Activated naive CD4-positive, alpha-beta T cell treated with anti-CD3 and anti-CD28 coated beads for 36 hours (primary cell): ENCODE measurements at regions of chr13 and their contacts with region 1.

Region 1: DNA sequence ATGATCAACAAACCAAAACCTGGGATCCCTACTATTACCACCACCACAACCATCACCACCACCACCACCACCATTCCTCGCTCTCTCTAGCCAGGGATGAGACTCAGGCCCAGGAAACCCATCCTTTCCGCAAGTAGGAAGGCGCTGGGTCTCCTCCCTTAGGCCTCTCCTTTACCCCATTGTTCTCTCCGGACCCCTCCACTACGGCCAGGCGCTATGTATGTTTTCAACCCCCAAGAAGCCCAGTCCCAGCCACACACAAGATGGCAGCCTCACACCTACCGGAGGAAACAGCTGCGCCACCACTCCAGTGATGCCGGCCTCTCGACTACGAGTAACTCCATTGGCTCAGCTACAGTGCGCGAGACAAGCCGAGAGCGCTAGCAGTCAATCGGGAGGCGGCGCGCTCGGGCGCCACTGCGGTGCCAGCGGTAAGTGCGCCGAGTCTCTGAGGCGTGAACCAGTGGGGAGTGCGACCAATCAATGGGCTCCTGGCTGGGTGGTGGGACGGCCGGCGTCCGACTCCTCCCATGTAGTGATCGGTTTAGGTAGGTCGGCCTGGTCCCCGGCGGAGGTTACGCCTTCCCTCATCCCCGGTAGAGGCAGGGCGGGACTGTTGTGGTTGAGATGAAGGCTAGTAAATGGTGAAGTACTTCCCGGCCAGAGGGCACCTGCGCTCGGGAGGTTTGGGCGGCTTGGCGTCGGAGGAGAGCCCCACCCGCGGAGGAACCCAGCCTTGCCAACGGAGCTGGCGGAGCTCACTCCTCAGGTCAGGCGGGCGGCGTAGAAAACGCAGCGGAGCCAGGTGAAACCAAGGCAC is at the starts of genes CAB39L and SETDB2:
- DNase-seq: peak; percentile 99
- H3K4me3 Mint-ChIP-seq: peak within 1 kb of the TSS; percentile 92
- H3K27ac Mint-ChIP-seq: peak within 1 kb of the TSS; percentile 96
- H3K4me1 Mint-ChIP-seq: peaks cover 56% of the 10 kb centered on the region
- H3K27me3 Mint-ChIP-seq: no peaks in the 10 kb centered on the region
- total RNA-seq, gene CAB39L: 3.8 to 4.5 TPM
- total RNA-seq, gene SETDB2: 15.8 to 16.2 TPM

Region 2: GRCh38 chr13:48144413-48145035 is 1299.4 kb before region 1 on chr13:
- CTCF ChIA-PET with region 1: no interaction called
- intact Hi-C with region 1: loop called (anchors 10 kb)
- DNase-seq: peak; percentile 52
- H3K4me3 Mint-ChIP-seq: no peak overlapping the region
- H3K27ac Mint-ChIP-seq: peak overlapping the region; percentile 80
- H3K4me1 Mint-ChIP-seq: peaks cover 40% of the 10 kb centered on the region
- H3K27me3 Mint-ChIP-seq: no peaks in the 10 kb centered on the region

Region 3: DNA sequence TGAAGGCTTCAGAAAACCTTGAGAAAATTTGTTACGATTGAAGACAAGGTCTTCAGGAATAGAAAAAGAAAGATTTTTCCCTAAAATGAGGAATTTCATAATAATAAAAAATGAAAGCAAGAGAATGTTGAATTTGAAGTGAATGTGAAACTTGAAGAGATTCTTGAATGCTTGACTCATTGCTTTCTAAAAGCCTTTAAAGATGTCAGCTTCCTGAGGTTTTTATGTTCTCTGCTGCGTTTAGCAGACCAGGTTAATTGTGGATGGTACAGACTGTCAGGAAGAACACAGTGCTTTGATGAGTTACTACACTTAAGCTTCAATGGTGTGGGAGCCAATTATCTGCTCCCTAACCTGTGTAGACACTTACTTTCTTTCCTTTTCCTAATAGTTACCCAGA is 564.5 kb before region 1 on chr13:
- CTCF ChIA-PET with region 1: no interaction called
- intact Hi-C with region 1: loop called (anchors 5 kb)
- DNase-seq: no peak
- H3K4me3 Mint-ChIP-seq: no peak overlapping the region
- H3K27ac Mint-ChIP-seq: no peak overlapping the region
- H3K4me1 Mint-ChIP-seq: peaks cover 42% of the 10 kb centered on the region
- H3K27me3 Mint-ChIP-seq: no peaks in the 10 kb centered on the region

Region 4: DNA sequence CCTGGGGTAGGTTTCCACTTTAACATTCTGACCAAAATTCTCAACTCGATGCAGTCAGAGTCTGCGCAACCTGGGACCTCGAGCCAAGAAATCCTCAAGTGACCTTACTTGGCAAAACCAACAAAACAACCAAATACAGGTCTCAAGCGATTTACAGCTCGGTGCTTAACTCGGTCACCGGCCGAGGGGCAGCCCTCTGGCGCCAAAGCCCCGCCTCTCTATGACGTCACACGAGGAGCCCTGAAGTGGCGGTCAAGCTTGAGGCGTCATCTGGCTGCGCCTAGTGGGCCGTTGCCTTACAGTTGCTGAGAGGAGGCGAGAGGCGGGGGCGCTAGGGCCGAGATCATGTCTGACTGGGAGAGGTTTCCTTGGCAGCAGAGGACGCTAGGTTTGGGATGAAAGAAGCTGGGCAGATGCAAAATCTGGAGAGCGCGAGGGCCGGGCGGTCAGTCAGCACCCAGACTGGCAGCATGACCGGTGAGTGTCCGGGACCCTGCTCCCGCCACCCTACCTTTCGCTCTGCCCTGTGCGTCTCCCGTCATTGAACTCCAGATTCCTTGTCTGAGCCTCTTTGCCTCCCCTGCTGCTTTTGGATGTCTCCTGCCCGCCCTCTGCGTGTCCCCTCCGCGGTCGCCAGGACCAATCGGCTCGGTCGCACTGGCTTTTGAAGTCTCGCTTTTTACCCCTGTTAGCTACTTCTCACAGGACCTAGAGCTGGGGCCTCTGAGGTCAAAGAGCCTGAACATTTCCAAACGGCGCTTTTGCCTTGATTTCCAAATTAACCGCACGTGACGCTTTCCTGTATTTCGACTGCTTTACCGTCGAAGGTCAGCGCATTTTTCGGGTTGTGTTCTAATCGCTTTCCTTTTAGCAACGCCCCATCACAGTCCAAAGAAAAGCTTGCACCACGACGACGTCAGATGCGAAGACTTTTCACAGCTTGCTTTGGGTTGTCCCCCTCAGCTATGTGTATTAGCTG is 196.0 kb before region 1 on chr13 and contains the start of gene CDADC1:
- CTCF ChIA-PET with region 1: no interaction called
- intact Hi-C with region 1: loop called (anchors 2 kb)
- DNase-seq: peak; percentile 96
- H3K4me3 Mint-ChIP-seq: peak within 1 kb of the TSS; percentile 98
- H3K27ac Mint-ChIP-seq: peak within 1 kb of the TSS; percentile 92
- H3K4me1 Mint-ChIP-seq: peaks cover 34% of the 10 kb centered on the region
- H3K27me3 Mint-ChIP-seq: no peaks in the 10 kb centered on the region
- total RNA-seq, gene CDADC1: 13.2 to 14.7 TPM

Region 5: GRCh38 chr13:49569956-49570689 is 126.2 kb after region 1 on chr13:
- CTCF ChIA-PET with region 1: no interaction called
- intact Hi-C with region 1: loop called (anchors 1 kb)
- DNase-seq: peak; percentile 44
- H3K4me3 Mint-ChIP-seq: no peak overlapping the region
- H3K27ac Mint-ChIP-seq: peak overlapping the region; percentile 32
- H3K4me1 Mint-ChIP-seq: peaks cover 23% of the 10 kb centered on the region
- H3K27me3 Mint-ChIP-seq: no peaks in the 10 kb centered on the region

Region 6: GRCh38 chr13:49690992-49691886 is 247.3 kb after region 1 on chr13 and contains the start of gene EBPL:
- CTCF ChIA-PET with region 1: no interaction called
- intact Hi-C with region 1: loop called (anchors 2 kb)
- DNase-seq: peak; percentile 94
- H3K4me3 Mint-ChIP-seq: peak within 1 kb of the TSS; percentile 86
- H3K27ac Mint-ChIP-seq: peak within 1 kb of the TSS; percentile 80
- H3K4me1 Mint-ChIP-seq: peaks cover 35% of the 10 kb centered on the region
- H3K27me3 Mint-ChIP-seq: no peaks in the 10 kb centered on the region
- total RNA-seq, gene EBPL: 46.8 to 49.3 TPM

Region 7: GRCh38 chr13:49996951-49997895 is 553.3 kb after region 1 on chr13 and contains the start of gene TRIM13:
- CTCF ChIA-PET with region 1: no interaction called
- intact Hi-C with region 1: loop called (anchors 2 kb)
- DNase-seq: peak; percentile 90
- H3K4me3 Mint-ChIP-seq: peak within 1 kb of the TSS; percentile 79
- H3K27ac Mint-ChIP-seq: peak within 1 kb of the TSS; percentile 85
- H3K4me1 Mint-ChIP-seq: peaks cover 33% of the 10 kb centered on the region
- H3K27me3 Mint-ChIP-seq: no peaks in the 10 kb centered on the region
- total RNA-seq, gene TRIM13: 15.5 to 15.8 TPM